Activated B cell treated with CpG ODN at 0.5 μM for 24 hours (primary cell): ENCODE measurements at regions of chr1 and their contacts with region 1.

Region 1: GRCh38 chr1:42173155-42173933 is 8.8 kb upstream of the GUCA2A start:
- DNase-seq: peak; percentile 62
- ATAC-seq: peak; percentile 77
- H3K4me3 Mint-ChIP-seq: no peak overlapping the region
- H3K27ac Mint-ChIP-seq: no peak overlapping the region
- H3K4me1 Mint-ChIP-seq: no peaks in the 10 kb centered on the region
- H3K27me3 Mint-ChIP-seq: no peaks in the 10 kb centered on the region
- CTCF ChIP-seq: peak; percentile 47

Region 2: GRCh38 chr1:41268154-41268770 is 905.1 kb before region 1 on chr1:
- CTCF ChIA-PET with region 1: no interaction called
- POLR2A ChIA-PET with region 1: no interaction called
- intact Hi-C with region 1: loop called (anchors 5 kb)
- DNase-seq: peak; percentile 55
- ATAC-seq: peak; percentile 72
- H3K4me3 Mint-ChIP-seq: no peak overlapping the region
- H3K27ac Mint-ChIP-seq: no peak overlapping the region
- H3K4me1 Mint-ChIP-seq: peaks cover 4% of the 10 kb centered on the region
- H3K27me3 Mint-ChIP-seq: peaks cover 2% of the 10 kb centered on the region
- CTCF ChIP-seq: peak; percentile 97

Region 3: DNA sequence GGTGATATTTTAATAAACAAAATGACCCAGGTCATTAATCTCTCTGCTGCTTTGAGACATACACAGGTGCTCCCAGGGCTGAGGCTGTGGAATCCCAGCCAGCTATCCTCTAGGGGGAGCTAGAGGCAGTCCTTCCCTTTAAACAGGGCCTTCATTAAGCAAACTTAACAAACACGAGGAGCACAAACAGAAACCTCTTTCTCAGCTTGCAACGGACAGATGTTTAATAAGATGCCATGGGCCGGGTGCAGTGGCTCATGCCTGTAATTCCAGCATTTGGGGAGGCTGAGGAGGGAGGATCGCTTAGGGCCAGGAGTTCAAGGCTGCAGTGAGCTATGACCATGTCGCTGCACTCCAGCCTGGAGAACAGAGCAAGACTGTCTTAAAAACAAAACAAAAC is 361.3 kb before region 1 on chr1:
- CTCF ChIA-PET with region 1: interaction called, 8 read pairs
- POLR2A ChIA-PET with region 1: interaction called, 3 read pairs
- intact Hi-C with region 1: loop called (anchors 1 kb)
- DNase-seq: no peak
- ATAC-seq: peak; percentile 34
- H3K4me3 Mint-ChIP-seq: no peak overlapping the region
- H3K27ac Mint-ChIP-seq: no peak overlapping the region
- H3K4me1 Mint-ChIP-seq: peaks cover 35% of the 10 kb centered on the region
- H3K27me3 Mint-ChIP-seq: no peaks in the 10 kb centered on the region
- CTCF ChIP-seq: no peak

Region 4: DNA sequence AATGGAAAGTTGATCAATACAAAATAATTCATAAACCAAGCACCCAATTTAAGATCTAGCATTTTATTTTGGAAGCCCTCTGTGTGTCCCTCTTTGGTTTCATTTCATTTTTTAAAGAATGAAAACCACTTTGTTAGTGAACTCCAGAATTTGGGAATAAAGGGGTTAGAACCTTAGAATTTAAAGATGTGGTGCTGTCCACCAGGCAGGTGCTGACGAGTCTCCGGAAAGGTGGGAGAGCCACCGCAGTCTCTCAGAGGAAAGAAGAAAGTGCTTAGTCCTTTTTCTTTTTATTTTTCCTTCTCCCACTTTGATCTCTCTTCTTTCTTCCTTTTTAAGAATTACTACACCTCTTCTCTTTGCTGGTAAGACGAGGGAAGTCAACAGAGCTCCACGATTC is 234.2 kb before region 1 on chr1:
- CTCF ChIA-PET with region 1: no interaction called
- POLR2A ChIA-PET with region 1: no interaction called
- intact Hi-C with region 1: no loop called
- DNase-seq: no peak
- ATAC-seq: no peak
- H3K4me3 Mint-ChIP-seq: no peak overlapping the region
- H3K27ac Mint-ChIP-seq: no peak overlapping the region
- H3K4me1 Mint-ChIP-seq: no peaks in the 10 kb centered on the region
- H3K27me3 Mint-ChIP-seq: peaks cover 15% of the 10 kb centered on the region
- CTCF ChIP-seq: no peak

Region 5: DNA sequence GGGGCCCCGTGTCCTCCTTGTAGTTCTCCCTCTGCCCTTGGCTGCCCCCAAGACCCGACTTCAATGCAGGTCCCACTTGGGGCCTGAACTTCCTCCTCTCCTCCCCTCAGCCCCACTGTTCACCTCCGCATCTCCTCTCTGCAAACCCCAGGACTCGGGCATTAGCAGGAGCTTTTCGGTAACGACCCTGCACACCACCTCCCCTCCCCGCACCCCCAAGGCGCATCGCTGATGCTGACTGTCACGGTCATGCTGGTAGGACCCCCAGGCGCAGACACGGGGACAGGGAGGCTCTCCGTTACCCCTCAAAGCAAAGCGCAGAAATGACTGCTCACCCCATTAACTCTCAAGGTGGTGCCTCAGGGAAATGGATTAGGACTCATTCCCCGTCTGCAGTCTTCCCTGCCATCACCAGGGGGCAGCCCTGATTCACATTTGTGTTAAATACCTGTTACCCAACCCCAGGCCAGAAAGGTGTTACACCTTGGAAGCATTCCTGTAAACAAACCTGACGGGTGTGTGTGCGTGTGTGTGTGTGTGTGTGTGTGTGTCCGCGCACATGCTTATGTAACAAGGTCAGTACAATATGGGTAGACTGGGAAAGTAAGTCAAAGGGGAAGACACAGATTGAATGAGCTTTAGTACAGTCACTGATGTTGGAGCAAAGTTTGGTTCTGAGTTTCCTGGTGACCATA is 26.6 kb before region 1 on chr1:
- CTCF ChIA-PET with region 1: interaction called, 5 read pairs
- POLR2A ChIA-PET with region 1: no interaction called
- intact Hi-C with region 1: loop called (anchors 1 kb)
- DNase-seq: peak; percentile 39
- ATAC-seq: peak; percentile 56
- H3K4me3 Mint-ChIP-seq: no peak overlapping the region
- H3K27ac Mint-ChIP-seq: no peak overlapping the region
- H3K4me1 Mint-ChIP-seq: no peaks in the 10 kb centered on the region
- H3K27me3 Mint-ChIP-seq: peaks cover 27% of the 10 kb centered on the region
- CTCF ChIP-seq: no peak